Pancreas (tissue), 10 donors: ENCODE measurements at regions of chr13 and their contacts with region 1.

Region 1: GRCh38 chr13:94435604-94436226 is 43.8 kb downstream of the DCT start:
- DNase-seq: no peak
- ATAC-seq: peak; percentile 77 to 88 (median 87)
- H3K4me3 ChIP-seq: no peak overlapping the region
- H3K27ac ChIP-seq: no peak overlapping the region
- H3K4me1 ChIP-seq: no peaks in the 10 kb centered on the region
- H3K27me3 ChIP-seq: no peaks in the 10 kb centered on the region
- CTCF ChIP-seq: peak; percentile 31 to 52 (median 42)

Region 2: DNA sequence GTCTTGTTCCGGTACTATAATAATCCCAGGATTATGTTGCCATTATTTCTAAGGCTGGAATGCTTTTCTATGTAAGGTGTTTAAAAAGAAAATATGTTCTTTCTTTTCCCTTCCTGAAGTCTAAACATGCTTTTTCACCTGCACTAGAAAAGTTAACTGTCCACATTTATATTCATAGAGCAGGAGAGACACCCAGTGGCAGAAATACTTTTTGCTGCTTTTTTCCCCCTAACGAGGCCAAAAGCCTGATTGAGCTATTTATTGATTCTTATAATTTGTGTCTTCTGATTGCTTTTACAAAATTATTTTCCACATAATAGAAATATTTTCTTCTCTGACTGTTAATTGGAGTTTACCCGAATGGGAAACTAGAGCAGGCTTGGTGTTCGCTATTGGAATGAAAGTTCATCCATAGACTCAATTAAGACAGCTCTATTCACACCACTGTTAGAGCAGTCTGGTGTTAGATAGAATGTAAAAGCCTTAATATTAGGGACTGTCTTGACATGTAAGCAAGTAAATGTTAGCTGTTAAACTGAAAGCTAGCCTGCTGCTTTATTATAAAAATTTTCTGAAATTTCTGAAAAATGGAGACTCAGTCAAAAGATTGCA is 181.8 kb after region 1 on chr13:
- intact Hi-C with region 1: loop called in 2 of 3 experiments (anchors 5 to 10 kb)
- DNase-seq: no peak
- ATAC-seq: peak; percentile 71 to 88 (median 86)
- H3K4me3 ChIP-seq: no peak overlapping the region
- H3K27ac ChIP-seq: no peak overlapping the region
- H3K4me1 ChIP-seq: no peaks in the 10 kb centered on the region
- H3K27me3 ChIP-seq: no peaks in the 10 kb centered on the region
- CTCF ChIP-seq: peak; percentile 8 to 48 (median 38)